Mammary epithelial cell (primary cell): ENCODE measurements at regions of chr15 and their contacts with region 1.

Region 1: DNA sequence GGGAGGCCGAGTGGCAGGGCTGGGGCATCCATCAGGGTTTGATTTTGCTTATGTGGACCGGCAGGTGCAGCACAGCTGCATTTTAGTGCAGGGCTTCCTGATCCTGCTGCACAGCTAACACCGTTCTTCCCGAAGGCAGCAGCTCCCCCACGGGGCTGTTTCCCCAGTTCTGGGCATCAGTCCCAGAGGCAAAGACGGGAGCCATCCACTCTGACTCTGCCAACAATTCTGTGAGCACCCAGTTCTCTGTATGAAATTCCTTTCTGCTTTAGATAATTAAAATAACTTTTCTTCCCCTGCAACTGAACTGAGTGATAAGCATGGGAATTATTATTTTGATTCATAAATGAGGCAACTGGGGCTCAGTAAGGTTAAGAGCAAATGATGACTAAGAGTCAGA is 262.9 kb upstream of the ATP10A start:
- DNase-seq: no peak
- H3K4me3 ChIP-seq: no peak overlapping the region
- H3K27ac ChIP-seq: no peak overlapping the region
- H3K4me1 ChIP-seq: no peaks in the 10 kb centered on the region
- H3K27me3 ChIP-seq: no peaks in the 10 kb centered on the region
- CTCF ChIP-seq: no peak

Region 2: GRCh38 chr15:26082221-26083109 is 43.6 kb before region 1 on chr15:
- CTCF ChIA-PET with region 1: no interaction called
- dilution Hi-C with region 1: loop called (anchors 5 kb)
- in situ Hi-C with region 1: no loop called
- intact Hi-C with region 1: no loop called
- DNase-seq: peak; percentile 91
- H3K4me3 ChIP-seq: peak overlapping the region; percentile 54 to 81 (median 72)
- H3K27ac ChIP-seq: peak overlapping the region; percentile 11
- H3K4me1 ChIP-seq: peaks cover 9% of the 10 kb centered on the region
- H3K27me3 ChIP-seq: no peaks in the 10 kb centered on the region
- CTCF ChIP-seq: no peak

Region 3: GRCh38 chr15:26166429-26166828 is 40.4 kb after region 1 on chr15:
- CTCF ChIA-PET with region 1: no interaction called
- dilution Hi-C with region 1: no loop called
- in situ Hi-C with region 1: no loop called
- intact Hi-C with region 1: no loop called
- DNase-seq: no peak
- H3K4me3 ChIP-seq: no peak overlapping the region
- H3K27ac ChIP-seq: no peak overlapping the region
- H3K4me1 ChIP-seq: no peaks in the 10 kb centered on the region
- H3K27me3 ChIP-seq: no peaks in the 10 kb centered on the region
- CTCF ChIP-seq: no peak